ENCODE measurements at regions of chr3 and their contacts with region 1.

Region 1: GRCh38 chr3:43503067-43503728 is 118.6 kb downstream of the ANO10 start:
- DNase-seq: peak; percentile 77
- ATAC-seq: peak; percentile 82
- H3K4me3 ChIP-seq: no peak overlapping the region
- H3K27ac ChIP-seq: peak overlapping the region; percentile 3; the same call in 1 of the 2 replicates
- H3K4me1 ChIP-seq: peaks cover 1% of the 10 kb centered on the region; the same call in 1 of the 2 replicates
- H3K27me3 ChIP-seq: no peaks in the 10 kb centered on the region
- CTCF ChIP-seq: peak; percentile 84

Region 2: DNA sequence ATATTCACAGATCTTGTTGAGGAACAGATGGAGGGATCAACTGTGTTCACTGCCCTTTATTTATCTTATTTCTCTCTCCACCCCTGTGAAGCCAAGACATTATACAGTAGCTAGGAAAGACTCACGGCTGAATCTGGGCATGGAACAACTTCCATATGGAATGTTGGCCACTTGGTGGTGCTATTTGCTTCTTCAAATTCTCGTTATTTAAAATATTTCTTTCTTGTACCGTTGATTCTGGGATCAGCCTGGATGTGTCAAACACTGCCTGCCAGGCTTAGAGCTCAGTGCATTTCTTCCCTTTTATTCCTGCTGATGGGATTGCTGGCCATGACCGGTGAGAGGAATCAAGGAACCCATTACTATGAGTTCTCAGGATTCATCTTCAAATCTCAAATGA is 541.6 kb before region 1 on chr3:
- CTCF ChIA-PET with region 1: no interaction called
- POLR2A ChIA-PET with region 1: no interaction called
- intact Hi-C with region 1: loop called (anchors 2 kb)
- DNase-seq: peak; percentile 80
- ATAC-seq: peak; percentile 86
- H3K4me3 ChIP-seq: no peak overlapping the region
- H3K27ac ChIP-seq: no peak overlapping the region
- H3K4me1 ChIP-seq: no peaks in the 10 kb centered on the region
- H3K27me3 ChIP-seq: no peaks in the 10 kb centered on the region; the same call in 1 of the 2 replicates
- CTCF ChIP-seq: peak; percentile 81

Region 3: DNA sequence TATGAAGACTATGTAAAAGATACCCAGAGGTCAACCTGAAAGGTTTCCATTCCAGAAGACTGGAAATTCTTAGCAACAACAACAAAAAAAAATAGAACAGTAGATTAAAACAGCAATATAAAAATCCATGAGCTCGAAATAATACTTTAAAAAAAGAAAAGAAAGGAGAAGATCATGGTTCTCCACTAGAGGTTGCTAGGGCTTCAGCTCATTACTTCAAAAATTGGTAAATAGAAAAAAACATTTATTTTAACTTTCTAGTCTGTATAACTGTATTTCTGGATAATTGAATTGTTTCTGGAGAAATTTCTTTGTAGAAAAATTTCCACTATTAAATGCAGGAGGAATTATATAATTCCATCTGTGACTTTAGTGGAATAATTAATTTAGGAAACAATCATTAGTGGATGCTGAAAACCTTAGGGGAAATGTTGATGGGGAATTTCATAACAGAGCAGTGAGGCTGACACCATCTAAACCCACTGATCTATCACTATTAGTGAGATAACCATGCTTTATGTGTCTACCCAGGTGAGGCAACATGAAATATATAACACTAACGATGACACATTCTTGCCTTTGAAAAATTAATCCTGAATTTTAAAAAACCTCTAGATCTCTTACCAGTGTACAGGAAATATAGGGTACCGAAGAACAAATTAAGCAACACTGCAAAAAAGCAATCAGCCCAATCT is 279.4 kb before region 1 on chr3:
- CTCF ChIA-PET with region 1: interaction called, 12 read pairs
- POLR2A ChIA-PET with region 1: no interaction called
- intact Hi-C with region 1: loop called (anchors 2 kb)
- DNase-seq: no peak
- ATAC-seq: peak; percentile 42; the same call in 1 of the 2 replicates
- H3K4me3 ChIP-seq: no peak overlapping the region
- H3K27ac ChIP-seq: no peak overlapping the region
- H3K4me1 ChIP-seq: no peaks in the 10 kb centered on the region
- H3K27me3 ChIP-seq: no peaks in the 10 kb centered on the region
- CTCF ChIP-seq: peak; percentile 54

Region 4: GRCh38 chr3:43286115-43286840 is 216.9 kb before region 1 on chr3 and contains the start of gene SNRK:
- CTCF ChIA-PET with region 1: no interaction called
- POLR2A ChIA-PET with region 1: no interaction called
- intact Hi-C with region 1: loop called (anchors 2 kb)
- DNase-seq: peak; percentile 89
- ATAC-seq: peak; percentile 69
- H3K4me3 ChIP-seq: peak within 1 kb of the TSS; percentile 85
- H3K27ac ChIP-seq: peak within 1 kb of the TSS; percentile 60
- H3K4me1 ChIP-seq: peaks cover 36% of the 10 kb centered on the region
- H3K27me3 ChIP-seq: no peaks in the 10 kb centered on the region
- CTCF ChIP-seq: no peak; the same call in 1 of the 2 replicates
- total RNA-seq, gene SNRK: 53.3 and 53.4 TPM in 2 replicates

Region 5: GRCh38 chr3:43423142-43423541 is 80.1 kb before region 1 on chr3:
- CTCF ChIA-PET with region 1: no interaction called
- POLR2A ChIA-PET with region 1: no interaction called
- intact Hi-C with region 1: loop called (anchors 5 kb)
- DNase-seq: peak; percentile 71
- ATAC-seq: peak; percentile 80
- H3K4me3 ChIP-seq: no peak overlapping the region
- H3K27ac ChIP-seq: peak overlapping the region; percentile 62
- H3K4me1 ChIP-seq: peaks cover 33% of the 10 kb centered on the region
- H3K27me3 ChIP-seq: no peaks in the 10 kb centered on the region
- CTCF ChIP-seq: no peak

Region 6: GRCh38 chr3:43465087-43465486 is 38.1 kb before region 1 on chr3:
- CTCF ChIA-PET with region 1: no interaction called
- POLR2A ChIA-PET with region 1: no interaction called
- intact Hi-C with region 1: loop called (anchors 2 kb)
- DNase-seq: peak; percentile 91
- ATAC-seq: peak; percentile 99
- H3K4me3 ChIP-seq: no peak overlapping the region
- H3K27ac ChIP-seq: peak overlapping the region; percentile 87
- H3K4me1 ChIP-seq: peaks cover 18% of the 10 kb centered on the region
- H3K27me3 ChIP-seq: no peaks in the 10 kb centered on the region
- CTCF ChIP-seq: no peak

Region 7: DNA sequence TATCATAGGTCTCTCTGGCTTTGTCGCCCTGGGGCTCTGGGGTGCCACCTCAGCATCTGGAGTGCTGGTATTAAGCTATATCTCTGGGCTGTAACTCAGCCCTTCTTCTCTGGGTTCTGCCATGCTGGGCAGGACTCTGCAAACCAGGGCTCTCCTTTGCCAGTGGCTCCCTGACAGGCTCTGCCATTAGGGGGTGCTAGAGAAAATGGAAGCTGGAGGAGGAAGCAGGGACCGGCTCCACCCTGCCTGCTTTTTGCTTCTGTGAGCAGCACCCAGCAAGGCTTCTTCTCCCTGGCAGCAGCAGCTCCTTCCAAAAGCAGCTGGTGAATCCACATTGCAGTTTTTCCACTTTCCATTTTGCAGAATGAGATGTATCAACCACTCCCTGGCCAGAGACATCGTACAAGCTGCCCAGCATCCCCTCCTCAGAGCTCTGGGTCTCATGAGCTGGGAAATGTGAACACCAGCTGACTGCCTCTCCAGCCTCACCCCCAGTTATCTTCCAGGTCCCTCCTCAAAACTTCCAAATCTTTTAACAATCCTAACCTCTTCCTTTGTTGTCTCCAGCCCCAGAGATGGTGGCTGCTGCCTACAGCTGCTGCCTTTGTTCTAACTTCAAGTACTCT is 352.6 kb after region 1 on chr3:
- CTCF ChIA-PET with region 1: no interaction called
- POLR2A ChIA-PET with region 1: no interaction called
- intact Hi-C with region 1: no loop called
- DNase-seq: peak; percentile 82
- ATAC-seq: peak; percentile 73
- H3K4me3 ChIP-seq: no peak overlapping the region
- H3K27ac ChIP-seq: no peak overlapping the region
- H3K4me1 ChIP-seq: peaks cover 36% of the 10 kb centered on the region
- H3K27me3 ChIP-seq: no peaks in the 10 kb centered on the region
- CTCF ChIP-seq: peak; percentile 85

Measured in PC-3 (cell line).